K562 (cell line): ENCODE measurements at regions of chr7 and their contacts with region 1.

Region 1: DNA sequence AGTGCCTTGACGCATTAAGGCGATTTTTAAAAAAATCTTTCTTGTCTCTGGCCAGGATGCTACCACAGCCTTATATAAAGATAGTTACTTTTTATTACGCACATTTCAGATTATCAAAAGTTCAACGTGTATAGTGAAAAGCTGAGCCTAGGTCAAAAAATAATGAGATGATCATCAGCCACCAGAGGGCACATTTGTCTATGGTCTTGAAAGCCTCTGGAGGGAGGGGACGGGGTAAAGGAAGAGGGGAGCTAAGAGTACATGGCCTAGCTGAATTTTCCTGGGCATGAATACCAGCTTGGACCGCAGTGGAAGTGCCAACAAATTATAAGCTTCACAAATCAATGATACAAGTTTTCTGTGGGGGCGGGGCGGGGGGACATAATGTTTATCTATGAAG is 285.9 kb upstream of the SMIM30 start:
- DNase-seq: peak; percentile 33 to 51 (median 38)
- ATAC-seq: peak; percentile 78
- H3K4me3 ChIP-seq: no peak overlapping the region
- H3K27ac ChIP-seq: no peak overlapping the region
- H3K4me1 ChIP-seq: no peaks in the 10 kb centered on the region
- H3K27me3 ChIP-seq: no peaks in the 10 kb centered on the region
- CTCF ChIP-seq: peak; percentile 42 to 44 (median 42); a peak in 5 of 6 replicates
- EP300 ChIP-seq: no peak
- POLR2A ChIP-seq: no peak
- RAD21 ChIP-seq: peak; percentile 27 to 54; a peak in 2 of 4 replicates

Region 2: DNA sequence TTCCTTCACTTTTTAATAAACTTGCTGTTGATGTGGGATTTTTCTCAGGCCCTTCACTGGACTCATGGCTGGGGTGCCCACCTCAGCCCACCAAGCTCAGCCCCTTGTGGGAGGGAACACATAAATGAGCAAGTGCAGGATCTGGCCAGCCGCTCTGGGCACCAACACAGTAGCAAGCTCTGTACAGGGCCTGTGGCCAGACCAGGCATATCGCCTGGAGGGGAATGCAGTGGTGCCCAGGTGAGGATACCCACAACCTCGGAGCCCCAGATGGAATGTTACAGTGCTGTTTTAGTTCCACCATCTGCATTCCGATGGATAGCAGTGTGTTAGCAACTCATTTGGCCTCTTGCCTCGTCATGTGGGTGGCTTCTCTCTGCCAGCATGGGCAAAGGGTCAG is 279.9 kb after region 1 on chr7:
- CTCF ChIA-PET with region 1: no interaction called
- POLR2A ChIA-PET with region 1: no interaction called
- in situ Hi-C with region 1: no loop called
- intact Hi-C with region 1: no loop called
- DNase-seq: no peak
- ATAC-seq: no peak
- H3K4me3 ChIP-seq: no peak overlapping the region
- H3K27ac ChIP-seq: no peak overlapping the region
- H3K4me1 ChIP-seq: no peaks in the 10 kb centered on the region
- H3K27me3 ChIP-seq: no peaks in the 10 kb centered on the region
- CTCF ChIP-seq: no peak
- EP300 ChIP-seq: no peak
- POLR2A ChIP-seq: no peak
- RAD21 ChIP-seq: no peak

Region 3: GRCh38 chr7:113698556-113699220 is 294.4 kb after region 1 on chr7:
- CTCF ChIA-PET with region 1: interaction called, 3 read pairs
- POLR2A ChIA-PET with region 1: no interaction called
- in situ Hi-C with region 1: no loop called
- intact Hi-C with region 1: loop called (anchors 2 kb)
- DNase-seq: peak; percentile 9 to 40 (median 20)
- ATAC-seq: no peak
- H3K4me3 ChIP-seq: no peak overlapping the region
- H3K27ac ChIP-seq: no peak overlapping the region
- H3K4me1 ChIP-seq: no peaks in the 10 kb centered on the region
- H3K27me3 ChIP-seq: no peaks in the 10 kb centered on the region
- CTCF ChIP-seq: peak; percentile 32 to 69 (median 60); a peak in 5 of 6 replicates
- EP300 ChIP-seq: no peak
- POLR2A ChIP-seq: no peak
- RAD21 ChIP-seq: peak; percentile 69 to 82